PC-3 (cell line): ENCODE measurements at regions of chr1 and their contacts with region 1.

Region 1: GRCh38 chr1:77683160-77684148 is 996 bp upstream of the ZZZ3 start:
- DNase-seq: peak; percentile 94
- ATAC-seq: peak; percentile 81
- H3K4me3 ChIP-seq: peak overlapping the region; percentile 90
- H3K27ac ChIP-seq: peak overlapping the region; percentile 91
- H3K4me1 ChIP-seq: peaks cover 29% of the 10 kb centered on the region
- H3K27me3 ChIP-seq: no peaks in the 10 kb centered on the region
- CTCF ChIP-seq: peak; percentile 81

Region 2: DNA sequence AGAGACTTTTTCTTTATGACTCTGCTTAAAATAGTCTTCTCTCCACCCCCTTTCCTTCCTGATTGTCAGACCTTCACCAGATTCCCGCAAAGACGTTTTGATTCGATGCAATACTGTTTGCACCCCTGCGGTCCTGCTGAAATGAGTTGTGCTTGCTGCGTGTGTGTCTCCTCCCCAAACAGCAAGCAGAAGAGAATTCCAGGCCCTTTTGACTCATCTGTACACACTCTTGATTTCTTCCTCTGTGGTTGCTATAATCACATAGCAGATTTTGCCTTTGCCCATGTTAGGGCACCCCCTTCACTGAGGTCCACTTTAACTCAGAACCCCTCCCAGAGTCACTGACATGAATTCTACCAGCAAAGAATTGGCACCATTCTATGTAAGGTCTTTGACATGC is 137.5 kb before region 1 on chr1:
- CTCF ChIA-PET with region 1: no interaction called
- POLR2A ChIA-PET with region 1: no interaction called
- intact Hi-C with region 1: loop called (anchors 2 kb)
- DNase-seq: no peak
- ATAC-seq: no peak
- H3K4me3 ChIP-seq: no peak overlapping the region
- H3K27ac ChIP-seq: no peak overlapping the region
- H3K4me1 ChIP-seq: peaks cover 27% of the 10 kb centered on the region
- H3K27me3 ChIP-seq: no peaks in the 10 kb centered on the region
- CTCF ChIP-seq: no peak

Region 3: DNA sequence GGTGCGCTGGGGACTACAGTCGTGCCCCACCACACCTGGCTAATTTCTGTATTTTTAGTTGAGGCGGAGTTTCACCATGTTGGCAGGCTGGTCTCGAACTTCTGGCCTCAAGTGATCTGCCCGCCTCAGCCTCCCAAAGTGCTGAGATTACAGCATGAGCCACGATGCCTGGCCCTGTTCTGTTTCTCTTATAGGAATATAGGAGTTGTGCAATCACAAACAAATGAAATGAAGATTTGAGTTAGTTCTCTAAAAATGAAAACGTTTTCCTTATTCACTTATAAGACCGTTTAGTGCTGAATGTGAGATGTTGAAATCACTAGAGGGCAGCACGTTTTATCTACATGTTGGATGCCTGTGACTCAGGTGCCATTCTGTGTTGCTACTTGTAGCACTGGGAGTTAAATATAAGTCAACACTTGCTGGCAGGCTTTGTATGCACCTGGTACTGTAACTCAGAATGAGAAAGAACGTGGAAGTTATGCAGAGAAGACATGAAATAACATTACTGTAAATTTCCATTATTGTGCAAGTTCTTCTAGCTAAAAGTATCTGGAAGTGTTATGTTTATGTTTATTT is 141.8 kb after region 1 on chr1:
- CTCF ChIA-PET with region 1: interaction called, 8 read pairs
- POLR2A ChIA-PET with region 1: interaction called, 4 read pairs
- intact Hi-C with region 1: loop called (anchors 10 kb)
- DNase-seq: peak; percentile 74
- ATAC-seq: peak; percentile 53
- H3K4me3 ChIP-seq: no peak overlapping the region
- H3K27ac ChIP-seq: 0 out of 2 replicates have a peak overlapping the region, but pooled peaks have one; percentile 53
- H3K4me1 ChIP-seq: peaks cover 15% of the 10 kb centered on the region
- H3K27me3 ChIP-seq: no peaks in the 10 kb centered on the region
- CTCF ChIP-seq: peak; percentile 65

Region 4: DNA sequence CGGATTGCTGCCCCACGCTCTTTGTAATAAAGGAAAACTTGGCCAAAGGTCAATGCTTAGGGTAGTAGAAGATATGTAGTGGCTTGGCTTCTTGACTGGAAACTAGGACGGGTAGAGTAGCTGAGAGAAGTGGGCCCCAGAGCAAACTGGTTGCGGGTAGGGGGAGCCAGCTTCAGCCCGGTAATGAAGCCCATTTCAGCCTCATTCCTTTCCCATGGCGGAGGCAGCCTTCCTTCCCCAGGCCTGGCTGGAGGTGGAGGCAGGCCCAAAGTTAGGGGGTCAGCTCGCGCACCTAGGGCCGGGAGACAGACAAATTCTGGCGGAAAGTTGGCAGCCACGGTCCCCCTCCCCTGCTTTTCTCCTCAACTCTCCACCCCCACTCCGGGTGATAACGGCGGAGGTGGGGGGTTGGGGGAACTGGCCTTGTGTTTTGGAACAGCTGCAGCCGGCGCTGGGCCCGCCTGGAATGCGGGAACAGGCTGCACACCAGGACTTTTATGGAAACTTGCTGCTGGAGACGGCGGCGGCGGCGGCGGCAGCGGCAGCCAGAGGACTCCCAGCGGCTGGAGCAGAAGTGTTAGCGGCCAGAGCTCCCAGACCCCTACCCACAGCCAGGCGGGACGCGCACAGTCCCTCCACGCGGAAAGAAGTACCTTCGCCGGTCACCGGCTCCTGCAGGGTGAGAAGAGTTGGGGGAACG is 204.8 kb after region 1 on chr1 and contains the start of gene NEXN:
- CTCF ChIA-PET with region 1: no interaction called
- POLR2A ChIA-PET with region 1: no interaction called
- intact Hi-C with region 1: loop called (anchors 5 kb)
- DNase-seq: peak; percentile 48
- ATAC-seq: peak; percentile 52
- H3K4me3 ChIP-seq: peak within 1 kb of the TSS; percentile 93
- H3K27ac ChIP-seq: peak within 1 kb of the TSS; percentile 72
- H3K4me1 ChIP-seq: peaks cover 22% of the 10 kb centered on the region
- H3K27me3 ChIP-seq: no peaks in the 10 kb centered on the region
- CTCF ChIP-seq: no peak
- total RNA-seq, gene NEXN: 3.1 and 3.5 TPM in 2 replicates

Region 5: DNA sequence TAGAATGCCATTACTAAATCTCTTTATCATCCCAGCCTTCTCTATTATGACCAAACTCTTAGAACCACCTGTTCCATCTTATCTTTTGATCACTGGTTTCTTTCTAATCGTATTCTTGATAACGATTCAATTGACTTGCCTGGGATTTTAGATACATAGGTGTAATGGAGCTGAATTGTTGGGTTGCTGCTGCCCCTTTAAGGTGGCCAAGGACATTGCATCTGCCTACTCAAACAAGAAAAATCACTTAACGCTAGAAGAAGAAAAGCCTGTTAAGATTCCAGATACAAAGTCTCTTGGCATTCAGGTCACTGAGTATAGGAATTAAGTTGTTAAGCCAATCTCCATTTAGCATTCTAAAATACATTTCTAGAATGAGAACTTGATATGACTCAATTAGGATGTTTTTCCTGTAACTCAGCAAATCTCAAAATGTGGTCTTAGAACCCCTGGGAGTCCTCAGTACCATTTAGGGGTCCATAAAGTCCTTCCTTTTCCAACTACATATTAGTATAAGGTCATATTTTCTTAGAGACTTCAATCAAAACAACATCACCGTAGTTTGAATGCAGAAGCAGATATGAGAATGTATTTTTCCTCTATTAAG is 217.3 kb after region 1 on chr1:
- CTCF ChIA-PET with region 1: no interaction called
- POLR2A ChIA-PET with region 1: no interaction called
- intact Hi-C with region 1: loop called (anchors 1 kb)
- DNase-seq: peak; percentile 69
- ATAC-seq: peak; percentile 85
- H3K4me3 ChIP-seq: no peak overlapping the region
- H3K27ac ChIP-seq: no peak overlapping the region
- H3K4me1 ChIP-seq: peaks cover 10% of the 10 kb centered on the region
- H3K27me3 ChIP-seq: no peaks in the 10 kb centered on the region
- CTCF ChIP-seq: peak; percentile 93